PC-3 (cell line): ENCODE measurements at regions of chr6 and their contacts with region 1.

Region 1: DNA sequence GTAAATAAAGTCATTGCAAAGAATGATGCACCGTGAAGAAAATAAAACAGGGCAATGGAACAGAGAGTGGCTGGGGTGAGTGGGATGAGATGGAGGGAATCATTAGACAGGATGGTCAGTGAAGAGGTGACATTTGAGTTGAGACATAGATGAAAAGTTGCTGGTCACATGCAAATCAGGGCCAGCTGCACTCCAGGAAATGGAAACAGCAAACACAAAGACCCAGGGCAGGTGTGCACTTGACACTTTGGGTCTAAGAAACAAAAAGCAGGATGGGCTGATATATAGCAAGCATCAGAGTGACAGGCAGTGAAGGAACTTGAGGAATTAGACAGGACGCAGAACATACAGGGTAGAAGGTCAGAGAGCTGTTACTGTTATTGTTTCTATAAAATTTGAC is 171.5 kb upstream of the RIPOR2 start:
- DNase-seq: no peak
- ATAC-seq: no peak
- H3K4me3 ChIP-seq: no peak overlapping the region
- H3K27ac ChIP-seq: no peak overlapping the region
- H3K4me1 ChIP-seq: peaks cover 17% of the 10 kb centered on the region
- H3K27me3 ChIP-seq: no peaks in the 10 kb centered on the region
- CTCF ChIP-seq: no peak

Region 2: GRCh38 chr6:25053875-25054371 is 53.3 kb before region 1 on chr6:
- CTCF ChIA-PET with region 1: no interaction called
- POLR2A ChIA-PET with region 1: no interaction called
- intact Hi-C with region 1: no loop called
- DNase-seq: peak; percentile 33
- ATAC-seq: no peak
- H3K4me3 ChIP-seq: no peak overlapping the region
- H3K27ac ChIP-seq: peak overlapping the region; percentile 39; the same call in 1 of the 2 replicates
- H3K4me1 ChIP-seq: peaks cover 24% of the 10 kb centered on the region
- H3K27me3 ChIP-seq: no peaks in the 10 kb centered on the region
- CTCF ChIP-seq: no peak

Region 3: DNA sequence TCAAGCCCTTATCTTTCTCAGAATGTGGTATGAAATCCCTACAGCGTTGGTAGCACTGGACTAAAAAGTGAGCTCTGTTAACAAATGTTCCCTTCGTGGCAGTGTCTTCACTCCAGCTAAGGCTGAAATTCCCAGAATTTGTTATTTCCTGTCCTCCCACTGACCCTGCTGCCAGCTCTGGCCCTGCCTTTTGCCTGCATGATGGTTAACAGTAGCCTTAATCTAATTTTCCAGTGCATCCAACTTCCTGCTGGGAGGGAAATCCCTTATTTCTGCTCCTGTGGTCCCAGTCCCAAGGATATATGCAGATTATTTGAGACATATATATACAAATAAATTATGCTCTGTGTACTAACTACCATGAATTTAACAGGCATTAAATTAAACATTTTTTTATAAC is 14.8 kb after region 1 on chr6:
- CTCF ChIA-PET with region 1: no interaction called
- POLR2A ChIA-PET with region 1: no interaction called
- intact Hi-C with region 1: loop called (anchors 1 kb)
- DNase-seq: no peak
- ATAC-seq: no peak
- H3K4me3 ChIP-seq: no peak overlapping the region
- H3K27ac ChIP-seq: no peak overlapping the region
- H3K4me1 ChIP-seq: no peaks in the 10 kb centered on the region
- H3K27me3 ChIP-seq: no peaks in the 10 kb centered on the region
- CTCF ChIP-seq: no peak